Naive thymus-derived CD4-positive, alpha-beta T cell (primary cell): ENCODE measurements at regions of chr12 and their contacts with region 1.

Region 1: DNA sequence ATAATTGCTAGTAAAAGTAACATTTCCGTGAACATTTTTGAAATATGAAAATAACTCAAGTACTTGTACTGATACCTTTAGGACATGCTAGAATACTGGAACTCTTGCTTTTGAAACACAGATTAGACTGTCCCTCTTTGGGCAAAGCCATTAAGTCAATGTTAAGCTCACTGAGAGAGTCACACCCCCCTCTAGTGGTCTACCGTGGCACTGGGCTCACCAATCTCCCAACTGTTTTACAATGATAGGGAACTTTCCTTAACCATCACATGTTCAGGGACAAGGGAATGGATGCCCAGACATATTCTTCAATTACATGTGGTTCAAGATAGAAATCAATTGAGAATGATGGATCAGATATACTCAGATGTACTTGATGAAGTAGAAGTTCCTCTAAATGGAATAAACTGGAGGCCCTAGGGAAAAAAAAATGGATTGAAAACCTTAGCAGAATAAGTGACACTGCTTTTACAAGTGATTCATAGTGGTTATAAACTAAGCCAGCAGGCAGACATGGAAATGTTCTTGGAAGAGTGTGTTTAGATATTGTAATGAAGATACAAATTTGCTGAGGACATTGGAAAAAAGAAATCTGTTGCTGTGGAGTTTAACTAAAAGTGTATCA is 17.8 kb downstream of the NANOG start:
- DNase-seq: peak; percentile 12 to 59 (median 40)
- ATAC-seq: peak; percentile 87
- H3K4me3 ChIP-seq: no peak overlapping the region
- H3K4me3 Mint-ChIP-seq: no peak overlapping the region
- H3K27ac ChIP-seq: no peak overlapping the region
- H3K27ac Mint-ChIP-seq: no peak overlapping the region
- H3K4me1 ChIP-seq: no peaks in the 10 kb centered on the region
- H3K4me1 Mint-ChIP-seq: peaks cover 0 to 2% (median 0%) of the 10 kb centered on the region in 7 donors
- H3K27me3 ChIP-seq: no peaks in the 10 kb centered on the region
- H3K27me3 Mint-ChIP-seq: peaks cover 0 to 4% (median 0%) of the 10 kb centered on the region in 5 donors

Region 2: GRCh38 chr12:7219599-7220243 is 587.3 kb before region 1 on chr12:
- CTCF ChIA-PET with region 1: no interaction called
- POLR2A ChIA-PET with region 1: no interaction called
- intact Hi-C with region 1: loop called in 1 of 2 experiments (anchors 1 kb)
- DNase-seq: peak; percentile 32 to 75 (median 66)
- ATAC-seq: peak; percentile 79
- H3K4me3 ChIP-seq: no peak overlapping the region
- H3K4me3 Mint-ChIP-seq: no peak overlapping the region
- H3K27ac ChIP-seq: no peak overlapping the region
- H3K27ac Mint-ChIP-seq: no peak overlapping the region
- H3K4me1 ChIP-seq: no peaks in the 10 kb centered on the region
- H3K4me1 Mint-ChIP-seq: peaks cover 0 to 1% (median 0%) of the 10 kb centered on the region in 7 donors
- H3K27me3 ChIP-seq: no peaks in the 10 kb centered on the region
- H3K27me3 Mint-ChIP-seq: peaks cover 0 to 9% (median 0%) of the 10 kb centered on the region in 5 donors

Region 3: GRCh38 chr12:7374423-7375144 is 432.4 kb before region 1 on chr12:
- CTCF ChIA-PET with region 1: no interaction called
- POLR2A ChIA-PET with region 1: no interaction called
- intact Hi-C with region 1: no loop called
- DNase-seq: no peak
- ATAC-seq: peak; percentile 38
- H3K4me3 ChIP-seq: no peak overlapping the region
- H3K4me3 Mint-ChIP-seq: no peak overlapping the region
- H3K27ac ChIP-seq: no peak overlapping the region
- H3K27ac Mint-ChIP-seq: no peak overlapping the region
- H3K4me1 ChIP-seq: no peaks in the 10 kb centered on the region
- H3K4me1 Mint-ChIP-seq: peaks cover 0 to 3% (median 0%) of the 10 kb centered on the region in 7 donors
- H3K27me3 ChIP-seq: peaks cover 0 to 5% of the 10 kb centered on the region in 2 donors
- H3K27me3 Mint-ChIP-seq: peaks cover 16 to 32% (median 20%) of the 10 kb centered on the region in 5 donors

Region 4: GRCh38 chr12:7460375-7461259 is 346.4 kb before region 1 on chr12:
- CTCF ChIA-PET with region 1: no interaction called
- POLR2A ChIA-PET with region 1: no interaction called
- intact Hi-C with region 1: loop called in 1 of 2 experiments (anchors 5 kb)
- DNase-seq: peak in 8 of 9 donors; percentile 20 to 49 (median 42)
- ATAC-seq: peak; percentile 82
- H3K4me3 ChIP-seq: no peak overlapping the region
- H3K4me3 Mint-ChIP-seq: no peak overlapping the region
- H3K27ac ChIP-seq: no peak overlapping the region
- H3K27ac Mint-ChIP-seq: no peak overlapping the region
- H3K4me1 ChIP-seq: no peaks in the 10 kb centered on the region
- H3K4me1 Mint-ChIP-seq: no peaks in the 10 kb centered on the region
- H3K27me3 ChIP-seq: no peaks in the 10 kb centered on the region
- H3K27me3 Mint-ChIP-seq: peaks cover under 1 to 18% (median 10%) of the 10 kb centered on the region in 5 donors

Region 5: DNA sequence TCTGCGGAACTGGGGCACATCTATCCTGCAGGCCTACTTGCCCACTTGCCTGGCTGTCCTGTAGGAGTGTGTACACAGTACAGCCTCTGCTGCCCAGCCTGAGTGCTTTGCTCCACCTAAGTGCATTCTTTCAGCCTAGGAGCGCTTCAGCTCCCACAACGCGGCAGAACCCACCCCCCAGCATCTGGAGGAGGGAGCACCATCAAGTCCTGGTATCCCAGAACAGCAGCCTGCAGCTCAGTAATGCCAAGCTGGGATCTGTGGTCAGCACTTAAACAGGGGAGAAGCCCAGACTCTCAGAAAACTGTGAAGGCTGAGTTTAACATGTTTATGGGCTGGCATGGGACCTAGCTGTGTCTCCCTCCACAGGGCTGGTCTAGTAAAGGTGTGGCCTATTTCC is 223.4 kb before region 1 on chr12:
- CTCF ChIA-PET with region 1: no interaction called
- POLR2A ChIA-PET with region 1: no interaction called
- intact Hi-C with region 1: loop called in 1 of 2 experiments (anchors 1 kb)
- DNase-seq: no peak
- ATAC-seq: no peak
- H3K4me3 ChIP-seq: no peak overlapping the region
- H3K4me3 Mint-ChIP-seq: no peak overlapping the region
- H3K27ac ChIP-seq: no peak overlapping the region
- H3K27ac Mint-ChIP-seq: no peak overlapping the region
- H3K4me1 ChIP-seq: no peaks in the 10 kb centered on the region
- H3K4me1 Mint-ChIP-seq: peaks cover 0 to 3% (median under 1%) of the 10 kb centered on the region in 7 donors
- H3K27me3 ChIP-seq: no peaks in the 10 kb centered on the region
- H3K27me3 Mint-ChIP-seq: peaks cover 36 to 56% (median 46%) of the 10 kb centered on the region in 5 donors

Region 6: GRCh38 chr12:7678738-7679137 is 128.2 kb before region 1 on chr12:
- CTCF ChIA-PET with region 1: interaction called, 4 read pairs
- POLR2A ChIA-PET with region 1: no interaction called
- intact Hi-C with region 1: loop called in 1 of 2 experiments (anchors 1 kb)
- DNase-seq: no peak
- ATAC-seq: no peak
- H3K4me3 ChIP-seq: no peak overlapping the region
- H3K4me3 Mint-ChIP-seq: no peak overlapping the region
- H3K27ac ChIP-seq: no peak overlapping the region
- H3K27ac Mint-ChIP-seq: no peak overlapping the region
- H3K4me1 ChIP-seq: no peaks in the 10 kb centered on the region
- H3K4me1 Mint-ChIP-seq: peaks cover 0 to 4% (median 3%) of the 10 kb centered on the region in 7 donors
- H3K27me3 ChIP-seq: no peaks in the 10 kb centered on the region
- H3K27me3 Mint-ChIP-seq: peaks cover 0 to 10% (median 7%) of the 10 kb centered on the region in 5 donors

Region 7: GRCh38 chr12:7787574-7788300 is 19.2 kb before region 1 on chr12:
- CTCF ChIA-PET with region 1: no interaction called
- POLR2A ChIA-PET with region 1: no interaction called
- intact Hi-C with region 1: no loop called
- DNase-seq: no peak
- ATAC-seq: no peak
- H3K4me3 ChIP-seq: no peak overlapping the region
- H3K4me3 Mint-ChIP-seq: no peak overlapping the region
- H3K27ac ChIP-seq: no peak overlapping the region
- H3K27ac Mint-ChIP-seq: no peak overlapping the region
- H3K4me1 ChIP-seq: no peaks in the 10 kb centered on the region
- H3K4me1 Mint-ChIP-seq: no peaks in the 10 kb centered on the region
- H3K27me3 ChIP-seq: no peaks in the 10 kb centered on the region
- H3K27me3 Mint-ChIP-seq: peaks cover 6 to 22% (median 7%) of the 10 kb centered on the region in 5 donors

Region 8: GRCh38 chr12:8562310-8562709 is 755.3 kb after region 1 on chr12:
- CTCF ChIA-PET with region 1: no interaction called
- POLR2A ChIA-PET with region 1: no interaction called
- intact Hi-C with region 1: no loop called
- DNase-seq: no peak
- ATAC-seq: no peak
- H3K4me3 ChIP-seq: no peak overlapping the region
- H3K4me3 Mint-ChIP-seq: no peak overlapping the region
- H3K27ac ChIP-seq: no peak overlapping the region
- H3K27ac Mint-ChIP-seq: no peak overlapping the region
- H3K4me1 ChIP-seq: no peaks in the 10 kb centered on the region
- H3K4me1 Mint-ChIP-seq: no peaks in the 10 kb centered on the region
- H3K27me3 ChIP-seq: peaks cover 0 to 4% of the 10 kb centered on the region in 2 donors
- H3K27me3 Mint-ChIP-seq: peaks cover 4 to 17% (median 7%) of the 10 kb centered on the region in 5 donors